Mucosa of descending colon (tissue), 3 donors: ENCODE measurements at regions of chr10 and their contacts with region 1.

Region 1: GRCh38 chr10:15439341-15439842 is 68.3 kb upstream of the FAM171A1 start:
- DNase-seq: peak in 1 of 3 donors; percentile 16
- ATAC-seq: peak; percentile 73
- H3K4me3 ChIP-seq: no peak overlapping the region
- H3K4me1 ChIP-seq: no peaks in the 10 kb centered on the region
- CTCF ChIP-seq: no peak

Region 2: GRCh38 chr10:15558136-15558535 is 118.7 kb after region 1 on chr10:
- intact Hi-C with region 1: no loop called
- DNase-seq: no peak
- ATAC-seq: no peak
- H3K4me3 ChIP-seq: no peak overlapping the region
- H3K4me1 ChIP-seq: no peaks in the 10 kb centered on the region
- CTCF ChIP-seq: no peak

Region 3: DNA sequence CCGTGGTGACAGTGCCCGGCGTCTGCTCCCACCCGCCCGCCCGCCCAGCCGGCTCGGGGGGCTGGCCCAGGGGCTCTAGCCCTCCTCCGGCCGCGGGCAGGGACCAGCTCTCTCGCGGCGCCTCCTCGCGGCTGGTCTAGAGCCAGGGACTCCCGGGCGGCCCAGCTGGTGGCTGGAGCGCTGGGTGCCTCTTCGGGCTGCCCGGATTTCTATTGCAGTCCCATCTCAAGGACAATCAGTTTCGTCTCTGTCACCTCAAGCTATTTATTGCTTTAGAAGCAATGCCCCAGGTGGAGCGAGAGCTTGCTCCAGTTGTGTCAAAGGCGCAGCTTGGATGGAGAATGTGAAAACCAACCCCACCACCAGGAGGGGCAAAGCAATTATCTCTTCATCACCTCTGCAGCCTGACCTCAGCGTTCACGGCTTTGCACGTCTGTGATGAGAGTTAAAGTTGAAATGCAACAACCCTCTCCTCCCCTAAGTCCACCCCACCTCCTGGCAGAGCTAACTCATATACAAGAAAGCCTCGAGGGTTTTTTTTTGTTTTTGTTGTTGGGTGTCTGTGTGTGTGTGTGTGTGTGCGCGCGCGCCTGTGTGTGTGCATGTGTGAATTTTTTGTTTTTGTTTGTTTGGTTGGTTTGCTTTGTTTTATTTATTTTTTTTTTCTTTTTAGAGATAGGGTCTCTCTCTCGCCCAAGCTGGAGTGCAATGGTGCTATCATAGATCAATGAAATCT is 280.7 kb after region 1 on chr10 and contains the start of gene ITGA8:
- intact Hi-C with region 1: loop called (anchors 5 to 10 kb)
- DNase-seq: peak; percentile 47 to 61 (median 54)
- ATAC-seq: peak; percentile 70
- H3K4me3 ChIP-seq: peak within 1 kb of the TSS; percentile 28
- H3K4me1 ChIP-seq: peaks cover 2% of the 10 kb centered on the region
- CTCF ChIP-seq: no peak
- total RNA-seq, gene ITGA8: 2.2 to 3.4 (median 2.5) TPM